Ascending aorta (tissue), 2 donors: ENCODE measurements at regions of chr16 and their contacts with region 1.

Region 1: GRCh38 chr16:75305364-75306098 is 54.1 kb upstream of the BCAR1 start:
- DNase-seq: peak; percentile 62 to 97
- H3K4me3 ChIP-seq: peak overlapping the region; percentile 27 to 41
- H3K27ac ChIP-seq: peak overlapping the region; percentile 78 to 93
- H3K4me1 ChIP-seq: peaks cover 17 to 30% of the 10 kb centered on the region in 2 donors
- H3K27me3 ChIP-seq: no peaks in the 10 kb centered on the region
- CTCF ChIP-seq: no peak

Region 2: DNA sequence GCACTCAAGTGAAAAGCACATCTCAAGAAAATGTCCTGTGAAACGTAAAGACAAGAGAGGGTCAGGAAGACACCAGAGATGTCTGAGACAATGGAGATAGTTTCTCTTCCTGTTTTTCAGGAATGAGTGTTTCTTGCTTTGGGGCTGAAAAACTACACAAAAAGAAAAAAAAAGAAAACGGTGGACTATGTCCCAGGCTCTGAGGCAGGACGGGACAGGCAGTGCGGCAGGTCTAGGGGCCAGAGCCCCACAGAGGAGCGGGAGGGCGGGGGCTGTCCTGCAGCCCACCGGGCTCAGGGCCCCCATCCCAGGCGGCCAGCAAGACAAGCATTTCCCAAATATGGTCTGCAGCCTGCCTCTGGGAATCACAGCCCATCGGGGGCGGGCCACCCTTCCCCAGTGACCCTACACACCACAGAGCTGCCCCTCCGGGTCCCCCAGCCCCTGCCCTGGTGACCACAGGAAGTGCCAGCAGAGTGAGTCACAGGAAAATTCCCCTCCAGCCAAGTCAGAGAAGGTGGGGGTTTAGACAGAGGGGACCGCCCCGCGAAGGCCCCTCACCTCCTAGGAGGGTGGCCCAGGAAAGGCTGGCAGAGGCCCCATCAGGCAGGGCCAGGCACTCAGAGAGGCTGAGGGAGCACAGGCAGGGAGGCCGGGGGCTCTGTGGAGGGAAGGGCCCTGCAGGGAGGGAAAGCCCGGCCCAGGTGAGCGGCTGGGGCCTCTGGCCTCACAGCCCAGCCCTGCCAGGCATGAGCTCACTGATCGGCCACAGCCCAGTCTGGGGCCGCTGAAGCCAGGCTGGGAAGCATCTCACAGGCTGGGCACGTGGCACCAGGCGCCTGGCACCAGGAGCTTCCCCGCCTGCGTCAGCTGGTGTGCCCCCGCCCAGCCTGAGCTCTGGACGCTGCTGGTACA is 60.4 kb before region 1 on chr16:
- intact Hi-C with region 1: loop called (anchors 2 kb)
- DNase-seq: peak; percentile 88 to 98
- H3K4me3 ChIP-seq: peak overlapping the region; percentile 5 to 40
- H3K27ac ChIP-seq: peak overlapping the region; percentile 94 to 100
- H3K4me1 ChIP-seq: peaks cover 51 to 95% of the 10 kb centered on the region in 2 donors
- H3K27me3 ChIP-seq: no peaks in the 10 kb centered on the region
- CTCF ChIP-seq: no peak

Region 3: GRCh38 chr16:75265845-75266701 is 39.5 kb before region 1 on chr16:
- intact Hi-C with region 1: loop called (anchors 2 kb)
- DNase-seq: peak in 1 of 2 donors; percentile 86
- H3K4me3 ChIP-seq: peak overlapping the region; percentile 76 to 86
- H3K27ac ChIP-seq: peak overlapping the region; percentile 90 to 95
- H3K4me1 ChIP-seq: peaks cover 34 to 38% of the 10 kb centered on the region in 2 donors
- H3K27me3 ChIP-seq: no peaks in the 10 kb centered on the region
- CTCF ChIP-seq: no peak

Region 4: GRCh38 chr16:75288596-75289120 is 16.9 kb before region 1 on chr16:
- intact Hi-C with region 1: no loop called
- DNase-seq: no peak
- H3K4me3 ChIP-seq: no peak overlapping the region
- H3K27ac ChIP-seq: peak overlapping the region in 1 of 2 donors; percentile 14
- H3K4me1 ChIP-seq: no peaks in the 10 kb centered on the region
- H3K27me3 ChIP-seq: no peaks in the 10 kb centered on the region
- CTCF ChIP-seq: no peak

Region 5: DNA sequence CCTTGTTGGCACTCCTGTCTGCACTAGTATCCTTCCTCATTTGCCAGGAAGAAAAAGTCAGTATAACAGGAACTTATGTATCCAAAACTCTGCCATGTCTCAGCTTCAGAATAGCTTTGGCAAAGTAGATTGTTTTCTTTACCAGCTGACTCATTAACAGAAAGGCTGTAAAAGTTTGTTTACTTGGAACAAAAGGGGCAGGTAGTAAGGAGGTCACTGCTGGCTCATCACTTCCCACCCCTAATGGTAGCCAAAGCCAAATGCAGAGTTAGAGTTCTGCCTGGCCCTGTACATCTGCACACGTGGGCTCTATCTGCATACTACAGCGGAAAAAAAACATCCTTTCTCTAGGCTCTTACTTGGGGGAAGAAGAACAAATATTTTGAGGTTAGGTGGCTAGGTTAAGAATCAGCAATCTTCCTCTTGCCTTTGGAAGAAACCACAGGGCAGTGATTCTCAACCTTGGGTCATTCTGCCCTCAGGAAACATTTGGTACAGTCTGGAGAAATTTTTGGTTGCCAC is 36.8 kb after region 1 on chr16:
- intact Hi-C with region 1: loop called (anchors 2 kb)
- DNase-seq: no peak
- H3K4me3 ChIP-seq: no peak overlapping the region
- H3K27ac ChIP-seq: peak overlapping the region; percentile 49 to 66
- H3K4me1 ChIP-seq: peaks cover 9 to 26% of the 10 kb centered on the region in 2 donors
- H3K27me3 ChIP-seq: no peaks in the 10 kb centered on the region
- CTCF ChIP-seq: no peak

Region 6: GRCh38 chr16:75385507-75386152 is 80.1 kb after region 1 on chr16:
- intact Hi-C with region 1: loop called (anchors 2 kb)
- DNase-seq: no peak
- H3K4me3 ChIP-seq: no peak overlapping the region
- H3K27ac ChIP-seq: peak overlapping the region; percentile 19 to 32
- H3K4me1 ChIP-seq: peaks cover 5 to 32% of the 10 kb centered on the region in 2 donors
- H3K27me3 ChIP-seq: no peaks in the 10 kb centered on the region
- CTCF ChIP-seq: peak; percentile 58 to 72 (median 68)